H1 (cell line): ENCODE measurements at regions of chr15 and their contacts with region 1.

Region 1: GRCh38 chr15:66156310-66156975 is 97.1 kb downstream of the MEGF11 start:
- DNase-seq: no peak
- H3K4me3 ChIP-seq: no peak overlapping the region
- H3K27ac ChIP-seq: no peak overlapping the region
- H3K4me1 ChIP-seq: no peaks in the 10 kb centered on the region
- H3K27me3 ChIP-seq: no peaks in the 10 kb centered on the region
- CTCF ChIP-seq: no peak
- EP300 ChIP-seq: no peak
- POLR2A ChIP-seq: no peak
- RAD21 ChIP-seq: no peak

Region 2: GRCh38 chr15:66138892-66139590 is 17.4 kb before region 1 on chr15:
- CTCF ChIA-PET with region 1: interaction called, 12 read pairs
- POLR2A ChIA-PET with region 1: no interaction called
- DNase-seq: no peak
- H3K4me3 ChIP-seq: no peak overlapping the region
- H3K27ac ChIP-seq: no peak overlapping the region
- H3K4me1 ChIP-seq: peaks cover 0 to 11% (median 3%) of the 10 kb centered on the region in 4 experiments; a peak in 4 of 7 replicates
- H3K27me3 ChIP-seq: no peaks in the 10 kb centered on the region
- CTCF ChIP-seq: no peak
- EP300 ChIP-seq: no peak
- POLR2A ChIP-seq: no peak
- RAD21 ChIP-seq: no peak